ENCODE measurements at regions of chr21 and their contacts with region 1.

Region 1: DNA sequence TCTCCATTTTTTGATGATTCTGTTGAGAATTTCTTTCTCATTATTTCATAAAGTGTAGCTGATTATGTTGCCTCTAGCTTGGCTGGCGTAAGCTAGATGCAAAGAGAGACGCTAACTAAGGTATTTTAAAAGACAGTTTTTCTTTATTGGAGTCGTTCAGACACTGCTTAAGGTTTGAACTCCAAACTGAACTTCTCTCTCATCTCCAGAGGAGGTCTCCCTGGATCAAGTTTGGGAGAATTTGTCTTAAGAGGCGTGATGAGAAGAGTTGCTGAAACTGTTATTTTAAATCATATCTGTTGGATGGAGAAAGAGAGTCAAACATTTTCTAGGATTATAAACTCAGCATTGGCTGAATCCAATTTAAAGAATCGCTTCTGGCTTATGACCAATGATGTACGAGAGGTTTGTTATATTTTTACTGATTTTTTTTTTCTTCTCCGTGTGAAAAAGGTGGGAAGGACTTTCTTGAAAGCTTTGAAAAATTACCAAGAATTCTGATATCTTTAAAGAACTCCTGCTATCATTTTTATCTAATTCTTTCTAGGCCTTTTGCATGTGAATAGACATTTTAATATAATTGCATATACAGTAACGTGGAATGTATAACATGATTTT is 34.0 kb downstream of the MAP3K7CL start:
- DNase-seq: no peak
- ATAC-seq: peak; percentile 73
- H3K4me3 ChIP-seq: no peak overlapping the region
- H3K27ac ChIP-seq: no peak overlapping the region
- H3K4me1 ChIP-seq: no peaks in the 10 kb centered on the region
- H3K27me3 ChIP-seq: no peaks in the 10 kb centered on the region

Region 2: DNA sequence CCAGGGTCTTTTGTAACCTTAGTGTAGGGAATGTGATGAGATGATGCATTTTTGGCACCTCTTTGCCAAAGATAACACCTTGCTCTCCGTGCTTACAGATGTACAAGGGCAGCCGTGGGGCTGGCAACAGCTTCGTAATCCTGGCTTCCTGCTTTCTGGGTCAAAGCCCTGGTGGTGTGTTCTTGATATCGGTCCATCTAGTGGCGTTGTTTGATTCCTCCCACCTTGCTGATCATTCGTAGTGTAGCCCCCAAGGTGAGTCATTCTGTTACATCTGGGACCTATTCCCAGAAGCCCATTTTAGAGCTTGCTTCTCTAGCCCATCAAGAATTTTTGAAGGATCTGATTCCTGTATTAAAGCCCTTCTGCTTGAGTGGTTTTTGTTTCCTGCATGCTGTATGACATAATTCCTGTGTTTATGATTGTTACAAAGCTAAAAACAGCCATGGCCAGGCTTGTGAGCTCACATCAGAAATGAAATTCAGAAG is 83.9 kb before region 1 on chr21:
- intact Hi-C with region 1: loop called in 1 of 2 experiments (anchors 5 kb)
- DNase-seq: no peak
- ATAC-seq: no peak
- H3K4me3 ChIP-seq: no peak overlapping the region
- H3K27ac ChIP-seq: peak overlapping the region; percentile 69 to 77
- H3K4me1 ChIP-seq: peaks cover 0 to 2% of the 10 kb centered on the region in 2 donors
- H3K27me3 ChIP-seq: no peaks in the 10 kb centered on the region

Region 3: DNA sequence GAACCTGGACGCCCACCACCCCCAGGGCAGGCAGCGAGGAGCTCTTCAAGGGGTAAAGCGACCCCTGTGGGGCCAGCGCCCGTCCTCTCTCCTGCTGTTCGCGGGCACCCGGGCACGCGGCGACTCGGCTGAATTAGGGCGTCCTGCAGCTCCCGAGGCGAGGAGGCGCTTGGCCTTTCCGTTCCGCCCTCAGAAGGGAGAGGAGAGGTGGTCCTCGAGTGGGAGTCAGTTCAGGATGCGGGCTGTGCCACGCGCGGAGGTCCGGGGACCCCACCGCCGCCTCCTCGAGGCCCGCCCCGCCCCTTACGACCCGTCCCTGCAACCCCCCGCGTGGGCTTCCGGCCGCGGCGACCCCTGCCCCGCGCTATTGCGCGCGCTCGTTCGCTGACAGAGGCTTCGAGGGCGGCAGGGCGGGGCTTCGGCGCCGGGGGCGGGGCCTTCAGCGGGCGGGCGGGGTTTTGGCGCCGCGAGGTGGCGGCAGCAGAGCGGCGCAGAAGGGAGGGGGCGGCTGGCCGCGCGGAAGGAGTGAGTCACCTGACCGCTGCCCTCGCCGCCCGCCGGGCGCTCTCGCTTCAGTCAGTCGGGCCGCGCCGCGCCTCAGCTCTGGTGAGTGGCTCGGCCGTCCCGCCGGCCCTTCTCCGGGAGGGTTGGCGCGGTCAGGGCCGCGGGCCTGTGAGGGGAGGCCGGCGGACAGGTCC is 134.1 kb after region 1 on chr21 and contains the start of gene BACH1:
- intact Hi-C with region 1: loop called in 1 of 2 experiments (anchors 5 kb)
- DNase-seq: peak; percentile 95 to 97
- ATAC-seq: peak; percentile 96
- H3K4me3 ChIP-seq: peak within 1 kb of the TSS; percentile 70 to 88
- H3K27ac ChIP-seq: peak within 1 kb of the TSS; percentile 59 to 71
- H3K4me1 ChIP-seq: peaks cover 6 to 12% of the 10 kb centered on the region in 2 donors
- H3K27me3 ChIP-seq: no peaks in the 10 kb centered on the region
- total RNA-seq, gene BACH1: 90.1 to 103 TPM

Region 4: DNA sequence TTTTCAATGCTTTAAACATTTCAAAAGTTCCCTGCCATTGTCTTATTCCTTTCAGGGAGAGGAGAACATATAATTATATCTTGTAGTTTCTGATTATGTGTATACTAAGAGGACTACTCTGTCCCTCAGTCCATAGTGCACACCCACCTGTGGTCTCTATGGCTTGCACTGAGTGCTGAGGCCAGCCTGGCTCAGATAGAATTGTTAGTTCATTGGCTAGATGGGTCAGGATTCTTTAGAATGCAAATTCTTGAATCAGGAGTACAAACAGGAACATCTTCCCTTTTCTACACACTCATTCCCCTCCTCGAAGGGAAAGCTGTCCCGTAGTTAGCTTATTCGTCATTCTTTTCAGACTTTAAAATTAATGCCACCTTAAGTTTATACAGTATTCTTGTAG is 142.5 kb after region 1 on chr21:
- intact Hi-C with region 1: loop called in 1 of 2 experiments (anchors 5 kb)
- DNase-seq: no peak
- ATAC-seq: no peak
- H3K4me3 ChIP-seq: no peak overlapping the region
- H3K27ac ChIP-seq: no peak overlapping the region
- H3K4me1 ChIP-seq: peaks cover 6 to 19% of the 10 kb centered on the region in 2 donors
- H3K27me3 ChIP-seq: no peaks in the 10 kb centered on the region

Region 5: GRCh38 chr21:29351691-29352090 is 187.3 kb after region 1 on chr21:
- intact Hi-C with region 1: loop called (anchors 5 kb)
- DNase-seq: no peak
- ATAC-seq: no peak
- H3K4me3 ChIP-seq: no peak overlapping the region
- H3K27ac ChIP-seq: peak overlapping the region in 1 of 2 donors; percentile 45
- H3K4me1 ChIP-seq: peaks cover 5% of the 10 kb centered on the region in 2 donors
- H3K27me3 ChIP-seq: no peaks in the 10 kb centered on the region

Region 6: DNA sequence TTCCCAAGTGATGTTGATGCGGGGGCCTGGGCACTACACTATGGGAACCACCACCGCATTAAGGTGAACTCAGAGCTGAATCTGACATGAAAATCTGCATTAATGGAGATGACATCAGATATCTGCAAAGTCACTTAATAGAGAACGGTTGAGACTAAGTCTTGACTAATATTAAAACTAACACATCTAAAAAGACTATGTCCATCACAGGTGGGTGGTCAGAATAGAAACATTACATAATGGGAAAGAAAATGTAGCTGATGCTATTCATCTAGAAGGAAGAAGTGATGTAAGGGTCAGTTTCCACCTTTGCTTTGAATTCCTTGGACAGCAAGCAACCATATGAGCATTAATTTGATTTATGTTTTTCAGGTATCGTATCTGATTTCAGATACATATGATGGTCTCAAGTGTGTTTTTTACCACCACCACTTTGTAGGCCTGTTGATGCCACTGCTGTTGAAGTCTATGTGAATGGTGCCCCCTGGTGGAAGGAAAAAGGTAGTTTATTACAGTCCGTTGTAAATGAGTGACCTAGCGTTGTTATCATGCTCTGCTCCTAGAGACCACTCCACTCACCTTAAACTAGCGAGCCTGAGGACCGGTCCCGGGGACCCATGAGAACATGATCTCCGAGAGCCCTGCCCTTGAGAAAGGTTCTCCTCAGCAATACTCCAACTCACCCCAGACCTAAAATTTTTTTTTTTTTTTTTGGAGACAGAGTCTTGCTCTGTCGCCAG is 207.8 kb after region 1 on chr21:
- intact Hi-C with region 1: loop called (anchors 2 to 5 kb)
- DNase-seq: no peak
- ATAC-seq: peak; percentile 88
- H3K4me3 ChIP-seq: no peak overlapping the region
- H3K27ac ChIP-seq: no peak overlapping the region
- H3K4me1 ChIP-seq: no peaks in the 10 kb centered on the region
- H3K27me3 ChIP-seq: no peaks in the 10 kb centered on the region